ENCODE measurements at regions of chr5 and their contacts with region 1.

Region 1: DNA sequence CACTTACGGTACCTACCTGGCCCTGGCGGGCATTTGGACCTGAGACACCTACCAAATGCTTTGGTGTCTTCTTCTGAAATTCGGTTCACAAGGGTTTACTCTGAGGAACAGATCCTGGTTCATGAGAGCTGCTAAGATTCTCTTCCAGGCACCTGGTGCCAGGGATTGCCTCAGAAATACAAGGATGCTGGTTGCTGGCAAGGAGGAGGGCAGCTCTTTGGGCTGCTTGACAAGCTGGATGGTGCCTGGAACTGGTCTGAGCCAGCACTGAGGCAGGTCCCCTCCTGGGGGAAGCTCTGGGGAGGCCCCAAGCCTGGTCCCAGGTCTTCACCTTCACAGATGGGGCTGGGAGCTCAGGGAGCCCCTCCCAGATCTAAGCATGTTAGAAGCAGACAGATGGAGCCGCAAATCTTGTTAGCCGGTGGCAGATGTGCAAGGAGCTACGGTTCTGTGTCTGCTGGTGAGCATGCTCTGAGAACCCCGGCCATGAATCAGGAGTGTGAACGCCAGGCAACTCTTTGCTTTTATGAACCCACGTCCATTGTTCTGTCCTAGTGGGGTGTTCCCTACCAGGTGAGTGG is 16.3 kb downstream of the FABP6 start:
- DNase-seq: no peak
- H3K4me3 ChIP-seq: no peak overlapping the region
- H3K27ac ChIP-seq: no peak overlapping the region
- H3K4me1 ChIP-seq: no peaks in the 10 kb centered on the region
- H3K27me3 ChIP-seq: no peaks in the 10 kb centered on the region
- CTCF ChIP-seq: no peak

Region 2: DNA sequence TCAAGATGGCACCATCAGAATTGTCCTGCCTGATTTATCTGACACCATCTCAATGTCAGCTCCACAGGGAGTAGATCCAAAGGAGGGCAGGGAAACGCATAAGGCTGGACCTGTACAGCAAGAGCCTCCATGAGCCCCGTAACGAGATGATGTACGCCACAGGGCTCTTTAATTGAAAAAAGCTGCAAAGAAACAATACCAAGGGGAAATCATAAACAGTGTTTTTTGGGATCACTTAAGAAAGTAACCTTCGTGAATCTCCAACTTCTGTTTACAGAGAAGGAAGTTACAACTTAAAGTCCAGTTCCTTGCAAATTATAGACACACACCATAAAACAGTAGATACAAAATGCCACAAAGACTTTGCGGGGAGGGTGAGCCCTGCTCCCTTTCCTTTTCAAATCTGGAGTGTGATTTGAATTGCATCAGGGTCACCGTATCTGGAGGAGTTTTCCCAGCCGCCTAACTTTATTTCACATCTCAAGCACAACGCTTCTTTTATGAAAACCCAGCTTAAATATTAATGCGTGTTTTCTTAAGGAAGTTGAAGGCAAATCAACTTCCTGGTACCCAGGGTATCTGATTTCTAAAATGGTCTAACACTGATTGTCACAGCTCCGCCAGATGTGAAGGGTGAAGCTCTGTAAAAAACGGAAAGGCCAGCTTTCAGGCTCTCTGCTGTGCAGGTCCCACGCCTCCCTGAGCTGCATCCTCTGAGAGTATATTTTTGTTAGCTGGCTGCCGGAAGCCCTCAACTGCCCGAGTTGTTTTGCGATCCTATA is 1234.7 kb before region 1 on chr5:
- CTCF ChIA-PET with region 1: interaction called, 12 read pairs
- POLR2A ChIA-PET with region 1: no interaction called
- intact Hi-C with region 1: no loop called
- DNase-seq: no peak
- H3K4me3 ChIP-seq: no peak overlapping the region
- H3K27ac ChIP-seq: no peak overlapping the region
- H3K4me1 ChIP-seq: no peaks in the 10 kb centered on the region
- H3K27me3 ChIP-seq: peaks cover 30% of the 10 kb centered on the region
- CTCF ChIP-seq: no peak

Region 3: GRCh38 chr5:160271396-160271795 is 25.8 kb after region 1 on chr5:
- CTCF ChIA-PET with region 1: no interaction called
- POLR2A ChIA-PET with region 1: no interaction called
- intact Hi-C with region 1: no loop called
- DNase-seq: no peak
- H3K4me3 ChIP-seq: no peak overlapping the region
- H3K27ac ChIP-seq: no peak overlapping the region
- H3K4me1 ChIP-seq: peaks cover 11% of the 10 kb centered on the region
- H3K27me3 ChIP-seq: no peaks in the 10 kb centered on the region
- CTCF ChIP-seq: no peak

Measured in PC-9 (cell line).